MCF 10A (cell line): ENCODE measurements at regions of chr9 and their contacts with region 1.

Region 1: GRCh38 chr9:105087910-105088888 is 156.3 kb upstream of the SLC44A1 start:
- DNase-seq: peak; percentile 55
- H3K4me3 Mint-ChIP-seq: no peak overlapping the region
- H3K27ac Mint-ChIP-seq: no peak overlapping the region
- H3K4me1 Mint-ChIP-seq: peaks cover 10% of the 10 kb centered on the region
- H3K27me3 Mint-ChIP-seq: no peaks in the 10 kb centered on the region
- CTCF ChIP-seq: no peak

Region 2: DNA sequence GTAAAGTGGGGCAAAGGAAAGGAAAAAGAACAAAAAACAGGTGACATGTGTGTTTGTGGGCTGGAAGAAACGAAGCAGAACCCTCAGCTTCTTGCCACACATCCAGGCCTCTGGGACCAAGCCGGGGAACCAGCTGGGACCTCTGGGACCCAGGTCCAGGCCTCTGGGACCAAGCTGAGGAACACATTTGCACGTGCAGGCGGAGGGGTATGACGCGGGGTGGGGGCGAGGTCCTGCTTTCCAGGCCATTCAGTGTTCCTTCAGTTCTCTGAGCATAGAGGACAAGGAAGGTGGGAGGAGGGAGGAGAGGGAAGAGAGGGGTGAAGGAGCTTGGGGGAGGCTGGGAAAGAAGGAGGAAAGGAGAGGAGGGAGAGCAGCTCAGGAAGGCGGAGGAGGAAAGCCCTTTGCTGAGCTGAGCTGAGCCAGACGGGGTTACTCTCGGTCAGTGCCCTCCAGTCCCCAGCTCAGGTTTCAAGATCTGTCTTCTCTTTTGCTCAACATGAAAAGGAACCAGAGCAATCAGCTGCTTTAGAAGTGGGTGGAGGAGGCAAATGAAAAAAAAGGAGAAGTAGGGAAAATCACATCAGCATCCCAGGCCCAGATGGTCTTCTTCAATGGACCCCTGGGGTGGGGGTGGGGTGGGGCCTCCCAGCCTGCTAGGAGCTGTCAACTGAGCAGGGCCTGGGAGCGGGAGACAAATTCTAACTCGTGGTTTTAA is 219.4 kb before region 1 on chr9:
- CTCF ChIA-PET with region 1: interaction called, 45 read pairs
- POLR2A ChIA-PET with region 1: no interaction called
- intact Hi-C with region 1: no loop called
- DNase-seq: peak; percentile 82
- H3K4me3 Mint-ChIP-seq: no peak overlapping the region
- H3K27ac Mint-ChIP-seq: no peak overlapping the region
- H3K4me1 Mint-ChIP-seq: peaks cover 41% of the 10 kb centered on the region
- H3K27me3 Mint-ChIP-seq: no peaks in the 10 kb centered on the region
- CTCF ChIP-seq: no peak